Activated naive CD4-positive, alpha-beta T cell treated with anti-CD3 and anti-CD28 coated beads for 36 hours (primary cell): ENCODE measurements at regions of chr2 and their contacts with region 1.

Region 1: GRCh38 chr2:218659258-218659987 is at the starts of genes BCS1L and ZNF142:
- DNase-seq: peak; percentile 98
- H3K4me3 Mint-ChIP-seq: peak within 1 kb of the TSS; percentile 90
- H3K27ac Mint-ChIP-seq: peak within 1 kb of the TSS; percentile 81
- H3K4me1 Mint-ChIP-seq: peaks cover 40% of the 10 kb centered on the region
- H3K27me3 Mint-ChIP-seq: no peaks in the 10 kb centered on the region
- total RNA-seq, gene BCS1L: 61.3 to 63.6 TPM
- total RNA-seq, gene ZNF142: 28.0 to 28.4 TPM

Region 2: GRCh38 chr2:218292048-218293014 is 367.1 kb before region 1 on chr2 and contains the start of gene TMBIM1:
- CTCF ChIA-PET with region 1: no interaction called
- intact Hi-C with region 1: loop called (anchors 2 kb)
- DNase-seq: peak; percentile 75
- H3K4me3 Mint-ChIP-seq: peak within 1 kb of the TSS; percentile 78
- H3K27ac Mint-ChIP-seq: peak within 1 kb of the TSS; percentile 94
- H3K4me1 Mint-ChIP-seq: peaks cover 46% of the 10 kb centered on the region
- H3K27me3 Mint-ChIP-seq: no peaks in the 10 kb centered on the region
- total RNA-seq, gene TMBIM1: 43.1 to 43.4 TPM

Region 3: DNA sequence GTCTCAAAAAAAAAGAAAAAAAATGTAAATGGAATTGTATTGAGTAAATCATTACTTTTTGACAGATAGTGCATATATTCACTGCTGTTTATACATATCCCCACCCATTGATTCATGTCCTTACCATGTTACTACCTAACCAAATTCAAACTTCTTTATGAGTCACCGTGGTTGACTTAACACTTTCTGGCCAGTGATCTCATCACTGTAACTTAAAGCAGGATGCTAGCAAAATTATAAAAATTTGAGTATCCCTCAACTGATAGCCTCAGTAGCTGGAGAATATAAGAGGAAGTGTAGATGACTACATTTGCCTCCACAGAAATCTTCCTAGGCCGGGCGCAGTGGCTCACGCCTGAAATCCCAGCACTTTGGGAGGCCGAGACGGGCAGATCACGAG is 77.3 kb before region 1 on chr2:
- CTCF ChIA-PET with region 1: no interaction called
- intact Hi-C with region 1: loop called (anchors 2 kb)
- DNase-seq: peak; percentile 26
- H3K4me3 Mint-ChIP-seq: no peak overlapping the region
- H3K27ac Mint-ChIP-seq: no peak overlapping the region
- H3K4me1 Mint-ChIP-seq: peaks cover 37% of the 10 kb centered on the region
- H3K27me3 Mint-ChIP-seq: no peaks in the 10 kb centered on the region

Region 4: GRCh38 chr2:218648088-218648786 is 11.2 kb before region 1 on chr2:
- CTCF ChIA-PET with region 1: interaction called, 59 read pairs
- intact Hi-C with region 1: no loop called
- DNase-seq: peak; percentile 70
- H3K4me3 Mint-ChIP-seq: no peak overlapping the region
- H3K27ac Mint-ChIP-seq: no peak overlapping the region
- H3K4me1 Mint-ChIP-seq: peaks cover 6% of the 10 kb centered on the region
- H3K27me3 Mint-ChIP-seq: no peaks in the 10 kb centered on the region

Region 5: GRCh38 chr2:218671654-218672566 is 12.5 kb after region 1 on chr2 and contains the starts of genes RNF25 and STK36:
- CTCF ChIA-PET with region 1: interaction called, 16 read pairs
- intact Hi-C with region 1: loop called (anchors 1 kb)
- DNase-seq: peak; percentile 86
- H3K4me3 Mint-ChIP-seq: peak within 1 kb of the TSS; percentile 98
- H3K27ac Mint-ChIP-seq: peak within 1 kb of the TSS; percentile 90
- H3K4me1 Mint-ChIP-seq: peaks cover 22% of the 10 kb centered on the region
- H3K27me3 Mint-ChIP-seq: no peaks in the 10 kb centered on the region
- total RNA-seq, gene RNF25: 9.6 to 10.4 TPM
- total RNA-seq, gene STK36: 14.7 to 15.1 TPM

Region 6: DNA sequence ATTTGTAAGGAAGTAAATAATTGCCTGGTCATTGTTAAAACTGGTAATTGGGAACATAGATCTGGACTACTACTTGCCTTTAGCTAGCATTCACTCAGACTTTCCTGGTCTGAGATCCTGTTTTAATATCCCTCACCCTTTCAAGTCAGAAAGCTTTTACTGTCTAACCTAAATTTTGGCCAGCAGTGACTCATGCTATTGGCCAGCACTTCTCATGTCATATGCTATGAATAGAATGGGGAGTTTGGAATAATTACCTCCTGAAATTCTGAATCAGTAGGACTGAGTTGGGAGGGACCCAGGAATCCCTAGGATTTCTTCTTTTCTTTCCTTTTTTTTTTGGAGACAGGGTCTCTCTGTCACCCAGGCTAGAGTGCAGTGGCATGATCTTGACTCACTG is 31.8 kb after region 1 on chr2:
- CTCF ChIA-PET with region 1: interaction called, 13 read pairs
- intact Hi-C with region 1: loop called (anchors 1 kb)
- DNase-seq: no peak
- H3K4me3 Mint-ChIP-seq: no peak overlapping the region
- H3K27ac Mint-ChIP-seq: no peak overlapping the region
- H3K4me1 Mint-ChIP-seq: peaks cover 2% of the 10 kb centered on the region
- H3K27me3 Mint-ChIP-seq: no peaks in the 10 kb centered on the region

Region 7: DNA sequence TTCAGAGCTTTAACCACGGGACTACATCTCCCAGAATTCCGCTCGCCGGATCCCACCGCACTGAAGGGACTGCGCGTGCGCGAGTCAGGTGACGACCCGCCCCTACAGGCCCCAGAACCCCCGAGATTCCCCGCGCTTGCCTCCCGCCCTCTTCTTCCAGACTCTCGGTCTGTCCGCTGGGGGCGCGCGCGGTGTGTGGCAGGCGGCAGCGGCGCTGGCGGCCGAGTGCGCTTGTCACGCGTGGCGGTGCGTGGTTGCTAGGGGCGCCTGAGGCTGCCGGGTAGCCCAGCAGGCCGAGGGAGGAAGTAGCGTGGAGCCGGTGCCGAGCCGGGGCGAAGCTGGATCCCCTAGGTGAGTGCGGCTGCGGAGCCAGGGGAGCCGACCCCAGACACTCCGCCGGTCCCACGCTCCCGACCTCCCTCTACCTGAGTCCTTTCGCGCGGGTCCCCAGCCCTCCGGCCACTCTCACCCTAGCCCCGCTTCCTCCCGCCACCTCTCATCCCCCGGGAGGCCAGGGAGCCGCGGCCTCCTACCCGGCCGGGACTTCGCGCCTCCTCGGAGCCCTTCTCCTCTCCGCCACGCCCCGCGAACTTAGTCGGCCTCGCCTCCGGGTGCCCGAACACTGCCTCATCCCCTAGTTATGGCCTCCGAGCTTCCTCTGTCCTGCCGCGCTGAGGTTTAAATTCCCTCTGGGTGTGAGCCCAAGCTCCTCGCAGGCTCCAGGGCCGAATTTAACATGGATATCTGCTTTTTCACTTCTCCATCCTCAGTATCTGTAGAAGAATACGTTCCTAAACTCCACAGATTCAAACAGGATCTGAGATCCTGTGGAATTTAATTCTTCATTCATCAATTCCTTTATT is 51.5 kb after region 1 on chr2 and contains the start of gene TTLL4:
- CTCF ChIA-PET with region 1: interaction called, 4 read pairs
- intact Hi-C with region 1: loop called (anchors 1 kb)
- DNase-seq: peak; percentile 99
- H3K4me3 Mint-ChIP-seq: peak within 1 kb of the TSS; percentile 98
- H3K27ac Mint-ChIP-seq: peak within 1 kb of the TSS; percentile 80
- H3K4me1 Mint-ChIP-seq: peaks cover 15% of the 10 kb centered on the region
- H3K27me3 Mint-ChIP-seq: peaks cover 3% of the 10 kb centered on the region
- total RNA-seq, gene TTLL4: 23.7 to 24.7 TPM